IMR-90 (cell line): ENCODE measurements at regions of chr11 and their contacts with region 1.

Region 1: DNA sequence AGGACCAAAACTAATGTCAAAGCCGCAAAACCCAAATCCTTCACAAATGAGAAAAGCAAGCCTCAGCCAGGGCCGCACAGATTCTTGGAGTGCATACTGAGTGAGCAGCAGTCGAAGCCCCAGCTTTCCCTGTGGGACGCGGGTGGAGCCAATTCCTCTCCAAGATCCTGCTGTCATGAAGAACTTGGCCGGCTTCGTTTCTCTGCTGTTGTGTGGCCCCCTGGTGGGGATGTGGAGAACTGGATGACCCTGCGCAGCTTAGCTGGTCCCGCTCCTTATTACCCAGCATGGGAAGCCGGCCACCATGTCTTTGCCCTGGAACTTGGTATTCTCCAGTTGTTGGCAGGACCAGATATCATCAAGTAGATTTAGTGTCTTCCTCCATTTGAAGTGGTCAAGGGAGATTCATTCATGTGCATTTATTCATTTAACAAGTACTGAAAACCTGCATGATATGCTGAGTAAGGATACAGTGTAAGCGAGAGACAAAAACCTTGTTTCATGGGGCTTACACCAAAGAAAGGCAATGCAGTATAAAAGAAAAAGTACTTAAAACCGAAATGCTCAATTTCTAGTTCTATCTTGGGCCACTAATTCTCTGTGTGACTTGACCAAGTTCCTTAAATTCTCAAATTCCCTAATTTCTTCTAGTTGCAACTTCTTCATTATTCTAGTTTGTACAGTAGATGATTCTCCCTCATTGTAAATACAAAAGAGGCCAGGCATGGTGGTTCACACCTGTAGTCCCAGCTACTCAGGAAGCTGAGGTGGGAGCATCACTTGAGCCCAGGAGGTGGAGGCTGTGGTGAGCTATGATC is 56.7 kb upstream of the CRTAM start:
- DNase-seq: peak; percentile 90
- ATAC-seq: peak; percentile 87
- H3K4me3 ChIP-seq: no peak overlapping the region
- H3K27ac ChIP-seq: no peak overlapping the region
- H3K4me1 ChIP-seq: peaks cover 10% of the 10 kb centered on the region
- H3K27me3 ChIP-seq: no peaks in the 10 kb centered on the region
- CTCF ChIP-seq: peak; percentile 94
- POLR2A ChIP-seq: no peak
- RAD21 ChIP-seq: peak; percentile 95

Region 2: DNA sequence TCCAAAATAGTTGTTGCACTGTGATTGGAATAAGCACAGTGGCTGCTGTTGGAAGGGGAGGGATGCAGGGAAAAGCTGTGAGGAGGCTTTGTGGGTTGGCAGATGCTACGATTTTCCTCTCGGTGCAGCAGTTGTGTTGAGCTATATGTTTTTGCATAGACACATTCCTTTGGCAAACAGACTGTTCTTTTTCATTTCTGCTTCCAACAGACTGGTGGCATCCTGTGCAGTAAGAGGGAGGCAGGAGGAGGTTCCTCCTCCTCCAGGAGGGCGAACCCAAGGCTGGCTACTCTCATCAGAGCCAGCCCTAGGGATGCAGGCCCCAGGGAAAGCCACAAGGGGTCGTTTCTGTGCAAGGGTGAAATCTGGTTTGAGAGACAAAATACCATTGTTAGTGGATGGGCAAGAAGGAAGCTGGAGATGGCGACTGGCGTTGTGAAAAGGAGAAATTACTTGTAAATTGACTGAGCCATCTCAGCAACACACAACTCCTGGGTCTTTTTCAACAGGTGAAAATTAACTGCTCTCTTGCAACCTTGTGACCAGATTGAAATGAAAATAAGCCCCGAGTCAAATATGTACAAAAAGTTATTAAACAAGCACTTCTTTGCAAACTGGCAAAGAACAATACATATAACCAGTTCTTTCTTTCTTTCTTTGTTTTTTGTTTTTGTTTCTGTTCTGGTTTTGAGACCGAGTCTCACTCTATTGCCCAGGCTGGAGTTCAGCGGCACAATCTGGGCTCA is 152.6 kb before region 1 on chr11:
- CTCF ChIA-PET with region 1: interaction called, 28 read pairs
- POLR2A ChIA-PET with region 1: no interaction called
- dilution Hi-C with region 1: no loop called
- in situ Hi-C with region 1: loop called (anchors 5 kb)
- intact Hi-C with region 1: loop called (anchors 1 kb)
- DNase-seq: peak; percentile 77
- ATAC-seq: peak; percentile 95
- H3K4me3 ChIP-seq: no peak overlapping the region
- H3K27ac ChIP-seq: no peak overlapping the region
- H3K4me1 ChIP-seq: peaks cover 6% of the 10 kb centered on the region
- H3K27me3 ChIP-seq: peaks cover 9% of the 10 kb centered on the region
- CTCF ChIP-seq: peak; percentile 93
- POLR2A ChIP-seq: no peak
- RAD21 ChIP-seq: peak; percentile 88

Region 3: DNA sequence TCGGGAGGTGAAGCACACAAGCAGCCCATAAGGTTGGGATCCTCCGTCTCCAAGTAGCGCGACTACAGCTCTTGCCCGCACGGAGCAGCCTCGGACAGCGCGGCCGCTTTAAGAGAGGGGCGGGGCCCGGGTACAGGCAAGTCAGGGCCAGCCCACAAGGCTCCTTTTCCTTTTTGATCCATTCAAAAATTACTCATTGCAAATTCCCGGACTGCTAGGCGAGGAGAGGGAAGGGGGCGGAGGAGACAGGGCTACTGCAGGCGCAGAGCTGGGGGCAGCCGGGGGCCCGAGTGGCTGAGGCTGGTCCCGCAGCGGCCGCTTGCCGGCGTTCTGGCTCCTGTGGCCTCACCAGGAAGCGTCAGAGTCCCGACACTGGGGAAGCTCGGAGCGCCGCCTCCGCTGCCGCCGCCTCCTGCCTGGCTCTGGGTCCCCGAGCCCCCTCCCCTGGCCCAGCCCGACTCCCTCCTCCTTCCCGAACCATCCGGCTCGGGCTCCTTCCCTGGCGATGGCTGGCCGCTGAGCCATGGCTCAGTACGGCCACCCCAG is 126.0 kb before region 1 on chr11 and contains the start of gene UBASH3B:
- CTCF ChIA-PET with region 1: interaction called, 9 read pairs
- POLR2A ChIA-PET with region 1: no interaction called
- dilution Hi-C with region 1: no loop called
- in situ Hi-C with region 1: no loop called
- intact Hi-C with region 1: loop called (anchors 1 kb)
- DNase-seq: peak; percentile 89
- ATAC-seq: peak; percentile 79
- H3K4me3 ChIP-seq: peak within 1 kb of the TSS; percentile 89
- H3K27ac ChIP-seq: peak within 1 kb of the TSS; percentile 93
- H3K4me1 ChIP-seq: peaks cover 12% of the 10 kb centered on the region
- H3K27me3 ChIP-seq: no peaks in the 10 kb centered on the region
- CTCF ChIP-seq: no peak
- POLR2A ChIP-seq: peak; percentile 96
- RAD21 ChIP-seq: no peak
- total RNA-seq, gene UBASH3B: 48.0 and 48.6 TPM in 2 replicates

Region 4: GRCh38 chr11:122709039-122709760 is 72.4 kb before region 1 on chr11:
- CTCF ChIA-PET with region 1: interaction called, 5 read pairs
- POLR2A ChIA-PET with region 1: no interaction called
- dilution Hi-C with region 1: no loop called
- in situ Hi-C with region 1: no loop called
- intact Hi-C with region 1: loop called (anchors 5 kb)
- DNase-seq: peak; percentile 82
- ATAC-seq: peak; percentile 61
- H3K4me3 ChIP-seq: no peak overlapping the region
- H3K27ac ChIP-seq: peak overlapping the region; percentile 28
- H3K4me1 ChIP-seq: peaks cover 34% of the 10 kb centered on the region
- H3K27me3 ChIP-seq: no peaks in the 10 kb centered on the region
- CTCF ChIP-seq: no peak
- POLR2A ChIP-seq: 0 out of 2 replicates have a peak, but pooled peaks have one; percentile 3
- RAD21 ChIP-seq: no peak

Region 5: GRCh38 chr11:122751292-122752070 is 30.1 kb before region 1 on chr11:
- CTCF ChIA-PET with region 1: interaction called, 11 read pairs
- POLR2A ChIA-PET with region 1: no interaction called
- dilution Hi-C with region 1: no loop called
- in situ Hi-C with region 1: no loop called
- intact Hi-C with region 1: no loop called
- DNase-seq: peak; percentile 72
- ATAC-seq: no peak
- H3K4me3 ChIP-seq: no peak overlapping the region
- H3K27ac ChIP-seq: no peak overlapping the region
- H3K4me1 ChIP-seq: peaks cover 14% of the 10 kb centered on the region
- H3K27me3 ChIP-seq: no peaks in the 10 kb centered on the region
- CTCF ChIP-seq: no peak
- POLR2A ChIP-seq: no peak
- RAD21 ChIP-seq: no peak